OCI-LY7 (cell line): ENCODE measurements at regions of chr20 and their contacts with region 1.

Region 1: DNA sequence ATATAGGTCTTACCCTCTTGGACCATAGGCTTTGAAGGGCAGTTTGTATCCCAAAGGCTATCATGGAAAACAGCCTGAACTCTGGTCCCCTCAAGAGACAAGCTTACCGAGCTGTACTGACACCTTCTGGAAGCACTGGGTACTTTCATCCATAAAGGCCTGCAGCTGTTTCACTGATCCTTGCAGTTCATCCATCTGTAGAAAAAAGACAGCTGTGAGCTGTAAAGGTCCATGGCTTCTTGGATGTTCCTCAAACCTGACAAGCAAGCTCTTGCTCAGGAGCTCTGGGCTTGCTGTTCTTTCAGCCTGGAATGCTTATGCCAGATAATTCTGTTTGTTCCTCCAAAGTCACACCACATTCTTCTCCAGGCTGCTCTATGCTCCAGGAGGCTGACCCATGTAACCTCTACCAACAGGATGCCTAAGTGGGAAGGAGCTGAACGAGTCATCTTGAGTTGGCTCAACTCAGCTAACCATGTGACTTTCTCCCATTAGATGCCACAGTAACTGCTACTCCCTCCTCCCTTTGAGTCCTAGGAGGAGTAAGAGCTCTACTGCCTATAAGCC is 8.8 kb upstream of the NDRG3 start:
- DNase-seq: peak; percentile 74
- H3K4me3 ChIP-seq: no peak overlapping the region
- H3K27ac ChIP-seq: peak overlapping the region; percentile 23
- H3K4me1 ChIP-seq: peaks cover 31% of the 10 kb centered on the region
- CTCF ChIP-seq: peak; percentile 89

Region 2: GRCh38 chr20:36506253-36506652 is 248.5 kb before region 1 on chr20:
- CTCF ChIA-PET with region 1: no interaction called
- POLR2A ChIA-PET with region 1: interaction called, 3 read pairs
- intact Hi-C with region 1: loop called (anchors 5 kb)
- DNase-seq: peak; percentile 50
- H3K4me3 ChIP-seq: no peak overlapping the region
- H3K27ac ChIP-seq: no peak overlapping the region
- H3K4me1 ChIP-seq: no peaks in the 10 kb centered on the region
- CTCF ChIP-seq: peak; percentile 81

Region 3: GRCh38 chr20:36613974-36614373 is 140.8 kb before region 1 on chr20:
- CTCF ChIA-PET with region 1: interaction called, 5 read pairs
- POLR2A ChIA-PET with region 1: no interaction called
- intact Hi-C with region 1: loop called (anchors 1 kb)
- DNase-seq: no peak
- H3K4me3 ChIP-seq: no peak overlapping the region
- H3K27ac ChIP-seq: no peak overlapping the region
- H3K4me1 ChIP-seq: no peaks in the 10 kb centered on the region
- CTCF ChIP-seq: no peak

Region 4: DNA sequence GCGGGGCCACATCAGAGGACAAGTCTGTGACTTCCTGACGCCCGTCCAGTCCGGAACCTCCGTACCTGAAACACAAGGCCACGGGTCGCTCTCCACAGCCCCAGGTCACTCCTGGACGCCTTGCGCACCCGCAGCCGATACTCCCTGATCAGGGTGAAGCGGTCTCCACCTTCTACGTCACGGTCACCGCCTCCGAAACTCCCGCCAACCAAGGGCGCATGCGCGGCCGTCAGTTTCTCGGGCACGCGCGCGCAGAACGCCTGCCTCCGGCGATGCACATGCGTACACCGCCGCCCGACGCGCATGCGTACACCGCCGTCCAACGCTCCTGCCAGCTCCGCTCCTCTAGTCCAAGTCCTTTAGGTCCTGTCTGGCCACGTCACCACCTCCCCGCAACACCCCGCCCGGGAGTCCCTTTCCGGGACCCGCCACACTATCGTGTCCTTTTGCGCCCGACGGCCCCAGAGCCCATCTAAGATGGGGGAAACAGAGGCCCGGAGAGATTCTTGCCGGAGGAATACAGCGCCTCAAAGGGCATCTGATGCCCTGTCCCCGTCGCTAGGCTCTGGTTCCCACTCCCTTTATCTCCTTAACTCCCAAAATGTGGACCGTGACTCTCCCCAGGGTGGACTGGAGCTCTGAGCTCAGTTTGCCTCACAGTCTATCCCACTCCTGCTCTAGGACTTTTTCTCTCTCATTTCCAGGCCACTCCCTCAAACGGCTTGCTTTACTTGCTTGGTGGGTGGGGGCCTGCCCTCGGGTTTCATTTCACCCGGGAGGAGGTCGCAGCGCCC is 19.1 kb after region 1 on chr20 and contains the start of gene DSN1:
- CTCF ChIA-PET with region 1: no interaction called
- POLR2A ChIA-PET with region 1: interaction called, 10 read pairs
- intact Hi-C with region 1: no loop called
- DNase-seq: peak; percentile 97
- H3K4me3 ChIP-seq: peak within 1 kb of the TSS; percentile 86
- H3K27ac ChIP-seq: peak within 1 kb of the TSS; percentile 49
- H3K4me1 ChIP-seq: peaks cover 41% of the 10 kb centered on the region
- CTCF ChIP-seq: no peak
- total RNA-seq, gene DSN1: 37.6 and 38.3 TPM in 2 replicates

Region 5: GRCh38 chr20:36941401-36941835 is 186.7 kb after region 1 on chr20:
- CTCF ChIA-PET with region 1: no interaction called
- POLR2A ChIA-PET with region 1: no interaction called
- intact Hi-C with region 1: no loop called
- DNase-seq: no peak
- H3K4me3 ChIP-seq: no peak overlapping the region
- H3K27ac ChIP-seq: no peak overlapping the region
- H3K4me1 ChIP-seq: no peaks in the 10 kb centered on the region
- CTCF ChIP-seq: no peak